RWPE1 (cell line): ENCODE measurements at regions of chr5 and their contacts with region 1.

Region 1: DNA sequence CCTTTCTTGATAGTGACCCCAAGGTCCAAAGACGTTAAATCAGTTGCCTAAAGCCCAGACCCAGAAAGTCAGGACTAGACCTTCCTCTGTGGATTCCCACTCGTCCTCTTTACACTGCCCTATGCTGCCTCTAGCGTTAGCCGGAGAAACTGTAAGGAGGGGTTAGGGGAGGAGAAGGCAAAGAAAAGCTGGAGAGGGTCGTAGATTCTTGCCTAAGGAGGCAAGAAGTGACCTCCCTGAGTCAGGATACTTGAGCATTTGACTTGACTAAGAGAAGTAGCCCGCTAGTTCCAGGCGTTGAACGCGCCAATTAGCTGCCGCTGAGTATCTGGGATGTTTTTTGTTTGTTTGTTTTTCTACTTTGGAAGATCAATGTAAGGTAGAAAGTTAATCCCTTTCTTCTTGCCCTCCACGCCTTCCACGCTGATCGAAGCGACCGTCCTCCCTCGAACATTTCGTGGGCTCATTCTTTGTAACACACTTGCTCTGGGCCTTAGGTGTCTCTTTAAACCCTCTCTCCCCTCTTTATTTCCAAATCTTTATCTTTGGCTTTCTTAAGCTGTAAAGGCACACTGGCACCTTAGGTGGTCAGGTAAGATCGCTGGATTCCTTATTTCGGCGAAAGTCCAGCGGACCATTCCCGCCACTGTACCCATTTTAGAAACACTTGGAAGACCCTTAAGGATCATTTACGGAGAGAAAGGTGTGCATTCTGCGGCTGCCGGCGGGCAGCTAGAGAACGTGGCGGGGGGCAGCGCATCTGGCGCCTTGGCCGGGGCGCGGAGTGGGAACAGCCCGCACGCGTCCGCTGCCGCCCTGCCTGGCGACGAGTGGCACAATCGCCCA is 5.1 kb upstream of the RGMB start:
- DNase-seq: peak; percentile 63
- H3K27ac ChIP-seq: peak overlapping the region; percentile 81
- CTCF ChIP-seq: peak; percentile 96

Region 2: DNA sequence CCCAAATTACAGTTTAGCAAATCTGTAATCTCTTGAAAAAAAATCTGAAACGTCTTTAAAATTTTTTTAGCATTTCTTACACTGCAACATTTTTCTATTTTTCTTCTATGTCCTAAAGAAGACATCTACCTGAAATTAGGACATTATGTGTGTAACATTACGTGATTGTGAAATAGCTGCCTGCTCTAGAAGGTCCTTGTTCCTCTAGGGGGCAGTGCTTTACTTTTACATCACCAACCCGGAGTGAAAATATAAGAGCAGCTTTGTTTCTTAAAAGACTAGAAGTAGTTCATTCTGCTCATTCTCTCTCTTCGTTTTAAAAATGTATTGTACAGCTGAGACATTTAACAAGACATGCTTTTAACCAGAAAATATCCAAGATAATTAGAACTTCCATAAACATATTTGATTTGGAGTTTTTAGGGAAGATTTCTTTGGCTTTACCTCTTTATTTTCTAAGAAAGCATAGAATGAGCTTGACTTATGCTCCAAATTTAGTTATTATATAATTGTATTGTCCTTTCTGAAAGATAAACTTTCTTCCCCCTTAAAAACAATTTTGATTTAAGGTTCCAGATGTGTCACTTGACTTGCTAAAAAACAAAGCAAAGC is 1537.3 kb before region 1 on chr5:
- CTCF ChIA-PET with region 1: interaction called, 10 read pairs
- POLR2A ChIA-PET with region 1: no interaction called
- DNase-seq: peak; percentile 77
- H3K27ac ChIP-seq: no peak overlapping the region
- CTCF ChIP-seq: peak; percentile 93

Region 3: GRCh38 chr5:98755406-98755805 is 13.0 kb before region 1 on chr5:
- CTCF ChIA-PET with region 1: interaction called, 22 read pairs
- POLR2A ChIA-PET with region 1: no interaction called
- DNase-seq: no peak
- H3K27ac ChIP-seq: no peak overlapping the region
- CTCF ChIP-seq: no peak

Region 4: GRCh38 chr5:98796197-98796972 is 28.0 kb after region 1 on chr5:
- CTCF ChIA-PET with region 1: interaction called, 19 read pairs
- POLR2A ChIA-PET with region 1: no interaction called
- DNase-seq: peak; percentile 88
- H3K27ac ChIP-seq: no peak overlapping the region
- CTCF ChIP-seq: peak; percentile 93

Region 5: DNA sequence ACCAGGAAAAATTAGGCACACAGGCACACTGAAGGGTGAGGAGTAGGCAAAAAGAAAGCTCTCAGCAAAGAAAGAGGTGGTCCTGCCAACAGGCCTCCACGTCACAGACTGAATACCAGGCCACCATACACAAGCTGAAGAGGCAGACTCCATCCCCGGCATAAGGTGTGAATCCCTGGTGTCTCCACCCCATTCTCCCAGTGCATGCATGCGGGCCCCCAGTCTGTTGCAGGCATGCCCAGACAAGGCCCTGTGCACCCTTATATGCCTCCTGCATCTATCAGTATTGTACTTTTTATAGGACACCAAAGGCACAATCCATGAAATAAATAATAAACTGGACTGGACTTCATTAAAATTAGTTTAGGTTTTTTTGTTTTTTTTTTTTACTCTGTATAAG is 78.1 kb after region 1 on chr5:
- CTCF ChIA-PET with region 1: no interaction called
- POLR2A ChIA-PET with region 1: no interaction called
- DNase-seq: no peak
- H3K27ac ChIP-seq: no peak overlapping the region
- CTCF ChIP-seq: no peak

Region 6: GRCh38 chr5:98975682-98976407 is 207.5 kb after region 1 on chr5:
- CTCF ChIA-PET with region 1: no interaction called
- POLR2A ChIA-PET with region 1: no interaction called
- DNase-seq: no peak
- H3K27ac ChIP-seq: no peak overlapping the region
- CTCF ChIP-seq: no peak